ENCODE measurements at regions of chr16 and their contacts with region 1.

Region 1: GRCh38 chr16:67579686-67580085 is 17.4 kb downstream of the CTCF start:
- DNase-seq: no peak
- ATAC-seq: no peak
- H3K4me3 ChIP-seq: no peak overlapping the region
- H3K4me3 Mint-ChIP-seq: no peak overlapping the region
- H3K27ac ChIP-seq: no peak overlapping the region
- H3K27ac Mint-ChIP-seq: peak overlapping the region in 6 of 9 donors; percentile 3 to 68 (median 37)
- H3K4me1 ChIP-seq: no peaks in the 10 kb centered on the region
- H3K4me1 Mint-ChIP-seq: peaks cover 8 to 39% (median 22%) of the 10 kb centered on the region in 7 donors
- H3K27me3 ChIP-seq: no peaks in the 10 kb centered on the region
- H3K27me3 Mint-ChIP-seq: no peaks in the 10 kb centered on the region

Region 2: GRCh38 chr16:67216612-67217490 is 362.8 kb before region 1 on chr16:
- CTCF ChIA-PET with region 1: no interaction called
- POLR2A ChIA-PET with region 1: no interaction called
- intact Hi-C with region 1: no loop called
- DNase-seq: no peak
- ATAC-seq: peak; percentile 61
- H3K4me3 ChIP-seq: no peak overlapping the region
- H3K4me3 Mint-ChIP-seq: no peak overlapping the region
- H3K27ac ChIP-seq: no peak overlapping the region
- H3K27ac Mint-ChIP-seq: peak overlapping the region in 1 of 9 donors; percentile 59
- H3K4me1 ChIP-seq: no peaks in the 10 kb centered on the region
- H3K4me1 Mint-ChIP-seq: peaks cover 0 to 18% (median 12%) of the 10 kb centered on the region in 7 donors
- H3K27me3 ChIP-seq: no peaks in the 10 kb centered on the region
- H3K27me3 Mint-ChIP-seq: no peaks in the 10 kb centered on the region

Region 3: DNA sequence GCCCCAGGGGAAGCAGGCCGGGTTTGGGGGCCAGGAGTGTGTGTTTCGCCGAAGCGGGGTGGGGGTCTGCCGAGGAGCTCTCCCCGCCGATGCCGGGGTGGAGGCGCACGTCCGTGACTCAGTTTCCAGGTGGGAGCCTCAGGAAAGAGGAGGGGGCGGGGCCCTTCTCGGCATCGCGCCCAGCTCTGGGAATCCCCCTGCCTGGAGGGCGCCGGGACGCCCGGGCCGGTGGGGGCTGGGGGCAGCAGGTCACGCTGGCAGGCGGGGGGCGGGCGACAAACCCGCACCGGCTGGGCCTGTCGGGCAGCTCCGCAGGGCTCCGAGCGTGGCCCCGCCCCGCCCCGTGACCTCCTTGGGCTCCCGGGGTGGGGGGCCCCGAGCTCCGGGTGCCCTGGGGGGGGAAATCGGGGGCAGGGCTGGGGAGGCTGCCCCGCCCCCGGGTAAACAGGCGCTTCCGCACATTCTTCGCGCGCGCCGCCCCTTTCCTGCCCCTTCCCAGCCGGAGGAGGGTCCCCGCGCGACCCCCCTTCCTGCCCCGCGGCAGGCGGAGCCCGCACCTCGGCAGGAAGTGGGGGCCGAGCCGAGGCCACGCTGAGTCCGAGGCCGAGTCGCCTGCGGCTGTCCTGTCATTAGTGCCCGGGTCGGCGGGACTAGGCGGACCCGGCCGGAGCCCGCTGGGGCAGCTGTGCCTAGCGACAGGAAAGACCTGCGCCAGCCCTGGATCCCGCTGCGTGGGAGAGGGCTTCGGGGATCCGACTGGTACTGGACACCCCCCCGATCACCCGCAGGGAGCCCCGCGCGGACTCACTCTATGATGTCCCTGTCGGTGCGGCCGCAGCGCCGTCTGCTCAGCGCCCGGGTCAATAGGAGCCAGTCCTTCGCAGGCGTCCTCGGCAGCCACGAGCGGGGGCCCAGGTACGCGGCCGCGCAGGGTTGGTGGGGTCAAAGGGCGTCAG is 41.8 kb before region 1 on chr16:
- CTCF ChIA-PET with region 1: no interaction called
- POLR2A ChIA-PET with region 1: no interaction called
- intact Hi-C with region 1: no loop called
- DNase-seq: peak; percentile 41 to 72 (median 61)
- ATAC-seq: peak; percentile 76
- H3K4me3 ChIP-seq: peak overlapping the region; percentile 68
- H3K4me3 Mint-ChIP-seq: peak overlapping the region; percentile 70 to 91 (median 86)
- H3K27ac ChIP-seq: peak overlapping the region; percentile 82
- H3K27ac Mint-ChIP-seq: peak overlapping the region in 7 of 9 donors; percentile 6 to 92 (median 82)
- H3K4me1 ChIP-seq: peaks cover 6 to 12% of the 10 kb centered on the region in 2 donors
- H3K4me1 Mint-ChIP-seq: peaks cover 35 to 56% (median 48%) of the 10 kb centered on the region in 7 donors
- H3K27me3 ChIP-seq: no peaks in the 10 kb centered on the region
- H3K27me3 Mint-ChIP-seq: peaks cover 0 to 35% (median 0%) of the 10 kb centered on the region in 5 donors

Region 4: GRCh38 chr16:67613808-67614207 is 34.1 kb after region 1 on chr16:
- CTCF ChIA-PET with region 1: no interaction called
- POLR2A ChIA-PET with region 1: interaction called, 3 read pairs
- intact Hi-C with region 1: loop called in 1 of 2 experiments (anchors 5 kb)
- DNase-seq: no peak
- ATAC-seq: no peak
- H3K4me3 ChIP-seq: no peak overlapping the region
- H3K4me3 Mint-ChIP-seq: no peak overlapping the region
- H3K27ac ChIP-seq: no peak overlapping the region
- H3K27ac Mint-ChIP-seq: no peak overlapping the region
- H3K4me1 ChIP-seq: no peaks in the 10 kb centered on the region
- H3K4me1 Mint-ChIP-seq: peaks cover 0 to 4% (median 0%) of the 10 kb centered on the region in 7 donors
- H3K27me3 ChIP-seq: no peaks in the 10 kb centered on the region
- H3K27me3 Mint-ChIP-seq: no peaks in the 10 kb centered on the region

Region 5: DNA sequence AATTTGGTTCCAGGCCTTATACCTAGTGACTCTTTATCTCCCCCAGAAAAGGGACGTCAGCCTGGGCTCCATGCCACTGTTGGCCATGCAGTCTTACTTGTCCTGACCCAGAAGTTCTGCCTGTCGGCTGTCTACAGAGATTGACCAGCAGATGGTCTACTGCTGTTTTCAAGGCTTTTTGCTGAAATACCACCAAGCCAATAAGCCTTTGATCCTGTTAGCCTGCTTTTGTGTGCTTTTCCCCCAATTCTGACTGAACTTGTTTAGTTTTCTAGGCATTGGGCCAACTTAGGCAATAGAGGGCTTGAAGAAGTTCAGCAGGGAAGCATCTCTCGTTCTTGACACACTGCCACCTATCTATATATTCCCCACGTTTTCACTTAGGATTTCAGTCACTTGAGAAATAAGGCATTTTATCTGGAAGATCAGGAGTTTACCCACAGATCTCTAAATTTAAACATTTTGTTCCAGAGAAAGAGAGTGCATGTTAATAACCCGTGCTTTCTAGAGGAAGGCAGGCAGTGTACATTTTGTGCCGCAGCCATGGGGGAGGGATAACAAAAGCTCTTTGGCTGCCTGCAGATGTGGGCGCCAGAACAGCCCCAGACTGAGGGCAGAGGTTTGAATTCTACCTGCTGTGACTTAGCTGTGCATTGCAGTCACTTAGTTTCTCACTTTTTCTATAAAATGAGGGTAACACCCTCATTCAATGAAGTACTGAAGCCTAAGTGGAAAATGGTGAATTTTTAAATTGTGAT is 52.9 kb after region 1 on chr16:
- CTCF ChIA-PET with region 1: no interaction called
- POLR2A ChIA-PET with region 1: no interaction called
- intact Hi-C with region 1: no loop called
- DNase-seq: no peak
- ATAC-seq: no peak
- H3K4me3 ChIP-seq: no peak overlapping the region
- H3K4me3 Mint-ChIP-seq: no peak overlapping the region
- H3K27ac ChIP-seq: no peak overlapping the region
- H3K27ac Mint-ChIP-seq: peak overlapping the region in 6 of 9 donors; percentile 4 to 81 (median 54)
- H3K4me1 ChIP-seq: no peaks in the 10 kb centered on the region
- H3K4me1 Mint-ChIP-seq: no peaks in the 10 kb centered on the region
- H3K27me3 ChIP-seq: no peaks in the 10 kb centered on the region
- H3K27me3 Mint-ChIP-seq: no peaks in the 10 kb centered on the region

Measured in naive thymus-derived CD4-positive, alpha-beta T cell (primary cell).